Transverse colon (tissue), 4 donors: ENCODE measurements at regions of chr10 and their contacts with region 1.

Region 1: GRCh38 chr10:85420501-85421191 is 945.9 kb downstream of the GRID1 start:
- DNase-seq: no peak
- H3K4me3 ChIP-seq: no peak overlapping the region
- H3K27ac ChIP-seq: no peak overlapping the region
- H3K4me1 ChIP-seq: no peaks in the 10 kb centered on the region
- H3K27me3 ChIP-seq: no peaks in the 10 kb centered on the region
- CTCF ChIP-seq: no peak
- EP300 ChIP-seq: no peak
- POLR2A ChIP-seq: no peak

Region 2: GRCh38 chr10:83917537-83918506 is 1502.8 kb before region 1 on chr10:
- in situ Hi-C with region 1: no loop called
- intact Hi-C with region 1: no loop called
- DNase-seq: peak; percentile 31
- H3K4me3 ChIP-seq: no peak overlapping the region
- H3K27ac ChIP-seq: no peak overlapping the region
- H3K4me1 ChIP-seq: peaks cover 0 to 4% (median 0%) of the 10 kb centered on the region in 4 donors
- H3K27me3 ChIP-seq: no peaks in the 10 kb centered on the region
- CTCF ChIP-seq: peak in 3 of 5 experiments; percentile 15 to 26 (median 25)
- EP300 ChIP-seq: no peak
- POLR2A ChIP-seq: no peak

Region 3: DNA sequence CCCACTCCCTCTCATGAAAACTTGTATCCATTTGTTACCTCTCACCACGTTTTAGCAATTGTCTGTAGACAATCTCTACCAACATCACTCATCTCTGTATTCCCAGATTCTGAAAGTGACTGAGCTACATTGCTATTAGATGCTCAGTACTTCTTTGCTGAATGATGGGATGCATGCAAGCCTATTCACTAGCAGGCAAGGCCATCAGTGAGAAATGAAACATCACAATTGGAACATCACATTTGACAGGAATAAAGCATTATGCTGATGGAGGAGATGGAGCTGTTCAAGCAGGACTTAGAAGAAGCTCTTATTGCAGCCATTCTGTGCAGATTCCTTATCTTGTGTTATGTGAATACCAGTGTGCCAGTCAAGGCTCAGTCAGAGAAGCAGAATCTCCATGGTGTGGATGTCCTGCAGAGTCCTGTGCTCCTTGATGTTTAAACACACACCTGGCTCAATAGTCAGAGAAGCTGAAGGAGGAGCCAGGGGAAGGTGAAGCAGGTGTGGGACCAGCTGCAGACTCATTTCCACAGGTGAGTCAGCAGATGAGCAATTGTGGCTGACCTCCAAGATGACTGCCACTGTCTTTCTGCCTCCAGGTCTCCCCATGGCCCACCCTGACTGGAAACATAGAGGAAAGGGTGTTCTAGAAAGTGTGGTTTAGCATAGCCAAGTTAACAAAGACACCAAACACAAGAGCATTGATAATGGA is 19.5 kb before region 1 on chr10:
- in situ Hi-C with region 1: no loop called
- intact Hi-C with region 1: loop called (anchors 1 kb)
- DNase-seq: no peak
- H3K4me3 ChIP-seq: no peak overlapping the region
- H3K27ac ChIP-seq: no peak overlapping the region
- H3K4me1 ChIP-seq: no peaks in the 10 kb centered on the region
- H3K27me3 ChIP-seq: no peaks in the 10 kb centered on the region
- CTCF ChIP-seq: no peak
- EP300 ChIP-seq: no peak
- POLR2A ChIP-seq: no peak